A549 (cell line): ENCODE measurements at regions of chr11 and their contacts with region 1.

Region 1: DNA sequence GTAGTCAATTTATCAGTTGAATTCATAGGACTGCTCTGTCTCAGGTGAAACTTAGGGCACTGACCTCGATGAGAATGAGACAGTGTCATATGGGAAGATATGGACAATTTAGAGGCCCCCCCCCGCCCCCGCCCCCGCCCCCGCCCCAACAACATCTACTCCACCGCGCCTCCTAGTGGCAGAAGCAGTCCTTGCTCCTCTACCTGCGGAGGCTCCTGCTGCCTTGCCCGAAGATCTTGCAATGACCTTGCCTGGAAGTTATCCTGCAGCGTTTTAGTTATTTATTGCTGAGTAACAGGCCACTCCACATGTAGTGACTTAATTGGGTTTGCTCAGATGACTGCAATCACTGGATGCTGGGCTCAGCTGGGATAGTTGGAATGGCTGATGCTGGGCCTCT is 15.2 kb downstream of the SERPINH1 start:
- DNase-seq: peak; percentile 37 to 61
- ATAC-seq: peak; percentile 42 to 59; a peak in 4 of 6 replicates
- H3K4me3 ChIP-seq: no peak overlapping the region
- H3K27ac ChIP-seq: no peak overlapping the region
- H3K4me1 ChIP-seq: peaks cover 9% of the 10 kb centered on the region; the same call in 2 of the 3 replicates
- CTCF ChIP-seq: peak; percentile 47
- EP300 ChIP-seq: no peak
- POLR2A ChIP-seq: no peak
- RAD21 ChIP-seq: peak; percentile 30 to 42; a peak in 3 of 5 replicates

Region 2: GRCh38 chr11:75547580-75548058 is 29.6 kb before region 1 on chr11:
- CTCF ChIA-PET with region 1: interaction called, 137 read pairs
- POLR2A ChIA-PET with region 1: no interaction called
- DNase-seq: peak; percentile 53 to 89
- ATAC-seq: peak; percentile 87 to 96
- H3K4me3 ChIP-seq: no peak overlapping the region
- H3K27ac ChIP-seq: peak overlapping the region in 1 of 2 experiments; percentile 43; a peak in 1 of 6 replicates
- H3K4me1 ChIP-seq: no peaks in the 10 kb centered on the region; the same call in 2 of the 3 replicates
- CTCF ChIP-seq: peak; percentile 89
- EP300 ChIP-seq: no peak
- POLR2A ChIP-seq: no peak
- RAD21 ChIP-seq: peak; percentile 88 to 89

Region 3: GRCh38 chr11:75562048-75562835 is 15.0 kb before region 1 on chr11 and contains the start of gene SERPINH1:
- CTCF ChIA-PET with region 1: interaction called, 137 read pairs
- POLR2A ChIA-PET with region 1: interaction called, 24 read pairs
- DNase-seq: peak; percentile 89 to 97
- ATAC-seq: peak; percentile 89 to 95
- H3K4me3 ChIP-seq: peak within 1 kb of the TSS; percentile 90
- H3K27ac ChIP-seq: peak within 1 kb of the TSS; percentile 97
- H3K4me1 ChIP-seq: peaks cover 62% of the 10 kb centered on the region
- CTCF ChIP-seq: no peak
- EP300 ChIP-seq: no peak
- POLR2A ChIP-seq: peak; percentile 91
- RAD21 ChIP-seq: no peak
- polyA plus RNA-seq, gene SERPINH1: 70.7 and 79.3 TPM in 2 replicates

Region 4: DNA sequence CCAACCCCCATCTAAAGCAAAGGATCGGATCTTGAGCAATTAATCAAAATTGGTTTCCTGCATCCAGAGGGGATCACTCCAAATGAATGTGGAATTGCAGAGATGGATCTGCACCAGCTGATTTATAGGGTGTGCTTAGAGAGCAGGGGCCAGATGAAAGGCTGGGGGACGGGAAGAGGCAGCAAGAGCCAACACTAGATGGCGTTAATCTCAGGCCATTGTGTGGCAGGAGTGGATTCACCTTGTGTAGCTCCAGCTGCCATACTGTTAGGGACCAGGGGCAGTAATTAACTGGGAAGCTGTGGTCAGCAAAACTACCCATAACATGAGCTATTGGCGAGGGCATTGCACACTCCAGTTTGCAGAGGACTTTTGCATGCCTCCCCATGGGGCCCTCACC is 20.4 kb after region 1 on chr11:
- CTCF ChIA-PET with region 1: interaction called, 16 read pairs
- POLR2A ChIA-PET with region 1: no interaction called
- DNase-seq: peak; percentile 48 to 56
- ATAC-seq: peak; percentile 77 to 92
- H3K4me3 ChIP-seq: no peak overlapping the region
- H3K27ac ChIP-seq: no peak overlapping the region
- H3K4me1 ChIP-seq: no peaks in the 10 kb centered on the region
- CTCF ChIP-seq: peak; percentile 58
- EP300 ChIP-seq: no peak
- POLR2A ChIP-seq: no peak
- RAD21 ChIP-seq: peak; percentile 41 to 51; a peak in 3 of 5 replicates

Region 5: GRCh38 chr11:76329084-76329984 is 752.1 kb after region 1 on chr11:
- CTCF ChIA-PET with region 1: no interaction called
- POLR2A ChIA-PET with region 1: no interaction called
- DNase-seq: no peak
- ATAC-seq: no peak; a peak in 2 of 6 replicates
- H3K4me3 ChIP-seq: no peak overlapping the region
- H3K27ac ChIP-seq: no peak overlapping the region
- H3K4me1 ChIP-seq: no peaks in the 10 kb centered on the region
- CTCF ChIP-seq: no peak
- EP300 ChIP-seq: no peak
- POLR2A ChIP-seq: no peak
- RAD21 ChIP-seq: no peak